Endothelial cell of umbilical vein (primary cell): ENCODE measurements at regions of chr12 and their contacts with region 1.

Region 1: DNA sequence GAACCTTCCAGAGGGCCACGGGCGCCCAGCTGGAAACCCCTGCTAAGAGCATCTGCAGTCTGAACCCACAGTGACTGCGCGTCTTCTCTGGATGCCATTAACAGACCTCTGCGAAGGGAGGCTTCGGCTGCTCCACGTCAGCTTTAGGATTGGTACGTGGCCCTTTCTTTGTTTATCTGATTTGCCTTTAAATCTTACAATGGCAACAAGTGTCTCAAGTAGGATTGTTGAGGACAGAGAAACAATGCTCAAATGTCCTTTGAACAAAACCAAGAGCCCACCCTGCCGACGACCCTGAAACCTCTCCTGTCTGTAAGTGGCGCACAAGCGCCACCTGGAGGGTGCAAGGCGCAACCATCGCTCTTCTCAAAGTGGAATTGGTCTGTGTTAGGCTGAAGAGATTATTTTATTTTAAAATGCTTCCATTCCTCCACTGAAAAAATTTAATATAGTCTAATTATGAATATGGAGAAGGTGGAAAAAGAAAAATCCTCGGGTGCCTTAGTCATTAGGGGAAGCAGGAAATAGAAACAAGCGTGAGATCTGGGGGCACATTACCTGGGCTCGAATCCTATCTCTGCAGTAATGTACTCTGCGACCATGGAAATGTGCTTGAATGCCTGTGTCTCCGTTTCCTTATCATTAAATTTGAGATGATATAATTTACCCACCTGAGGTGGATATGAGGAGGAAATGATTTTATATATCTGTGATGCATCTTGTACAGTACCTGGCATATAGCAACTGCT is 82.6 kb upstream of the PTPRB start:
- DNase-seq: peak; percentile 83
- H3K4me3 ChIP-seq: peak overlapping the region in 2 of 3 experiments; percentile 22 to 48
- H3K27ac ChIP-seq: peak overlapping the region; percentile 34
- H3K4me1 ChIP-seq: peaks cover 30% of the 10 kb centered on the region
- H3K27me3 ChIP-seq: no peaks in the 10 kb centered on the region
- CTCF ChIP-seq: peak; percentile 86 to 96
- POLR2A ChIP-seq: no peak

Region 2: GRCh38 chr12:69879041-69879960 is 840.5 kb before region 1 on chr12:
- CTCF ChIA-PET with region 1: interaction called, 17 read pairs
- POLR2A ChIA-PET with region 1: no interaction called
- dilution Hi-C with region 1: no loop called
- intact Hi-C with region 1: no loop called
- DNase-seq: peak; percentile 76
- H3K4me3 ChIP-seq: no peak overlapping the region
- H3K27ac ChIP-seq: no peak overlapping the region
- H3K4me1 ChIP-seq: no peaks in the 10 kb centered on the region
- H3K27me3 ChIP-seq: no peaks in the 10 kb centered on the region
- CTCF ChIP-seq: peak; percentile 87
- POLR2A ChIP-seq: no peak

Region 3: GRCh38 chr12:70543444-70543843 is 176.4 kb before region 1 on chr12:
- CTCF ChIA-PET with region 1: interaction called, 5 read pairs
- POLR2A ChIA-PET with region 1: no interaction called
- dilution Hi-C with region 1: no loop called
- intact Hi-C with region 1: loop called (anchors 1 kb)
- DNase-seq: peak; percentile 92
- H3K4me3 ChIP-seq: no peak overlapping the region
- H3K27ac ChIP-seq: peak overlapping the region; percentile 82
- H3K4me1 ChIP-seq: peaks cover 26% of the 10 kb centered on the region
- H3K27me3 ChIP-seq: no peaks in the 10 kb centered on the region
- CTCF ChIP-seq: no peak
- POLR2A ChIP-seq: peak; percentile 17

Region 4: DNA sequence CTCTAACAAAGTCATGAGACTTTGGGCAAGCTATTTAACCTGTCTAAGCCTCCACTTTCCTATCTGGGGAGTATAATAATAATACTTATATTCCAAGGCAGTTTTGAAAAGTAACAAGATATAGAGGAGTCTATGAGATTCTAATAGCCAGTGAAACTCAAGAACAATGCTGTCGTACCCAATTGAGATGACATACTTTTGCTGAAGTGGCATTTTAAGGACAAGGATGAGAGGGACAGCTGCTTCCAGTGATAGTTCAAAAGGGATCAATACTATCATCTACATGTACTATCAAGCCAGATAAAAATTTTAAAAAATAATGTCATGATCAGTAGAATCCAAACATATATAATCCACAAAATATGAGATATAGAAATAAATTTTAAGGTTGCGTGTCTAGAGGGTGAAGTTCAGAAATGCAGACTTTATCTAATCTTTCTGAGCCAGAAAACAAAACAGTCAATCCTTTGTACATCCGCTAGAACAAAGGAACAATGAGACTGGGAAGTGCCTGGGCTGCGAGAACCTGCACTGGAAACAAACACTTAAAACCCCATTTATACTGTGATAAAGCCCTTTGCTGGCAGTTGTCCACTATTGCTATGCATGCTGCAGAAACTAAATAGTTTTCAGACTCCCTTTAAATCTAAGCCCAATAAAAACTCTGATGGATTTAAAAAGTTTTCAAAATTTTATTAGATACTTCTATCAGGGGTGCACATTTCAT is 121.2 kb before region 1 on chr12:
- CTCF ChIA-PET with region 1: interaction called, 119 read pairs
- POLR2A ChIA-PET with region 1: no interaction called
- dilution Hi-C with region 1: loop called (anchors 25 kb)
- intact Hi-C with region 1: no loop called
- DNase-seq: peak; percentile 96
- H3K4me3 ChIP-seq: peak overlapping the region in 1 of 3 experiments; percentile 40
- H3K27ac ChIP-seq: peak overlapping the region; percentile 92
- H3K4me1 ChIP-seq: peaks cover 48% of the 10 kb centered on the region
- H3K27me3 ChIP-seq: no peaks in the 10 kb centered on the region
- CTCF ChIP-seq: no peak
- POLR2A ChIP-seq: peak; percentile 32

Region 5: DNA sequence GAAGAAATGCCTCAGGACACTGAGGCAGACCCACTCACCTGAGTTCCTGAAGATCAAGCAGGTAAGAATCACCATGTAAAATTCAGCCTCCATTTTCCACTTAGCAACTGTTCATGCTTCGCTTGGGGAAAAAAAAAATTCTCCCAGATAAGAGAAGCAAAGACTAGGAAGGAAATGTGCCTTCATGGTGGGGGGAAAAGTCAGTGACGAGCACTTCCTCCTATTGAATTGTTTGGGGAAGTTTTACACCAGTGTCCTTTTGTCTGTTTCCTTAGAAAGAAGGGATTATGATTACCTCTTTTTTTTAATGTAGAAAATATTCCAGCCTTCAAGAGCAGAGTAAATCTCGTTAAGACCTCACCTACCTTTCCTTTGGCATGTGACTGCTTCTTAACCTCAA is 82.5 kb before region 1 on chr12 and contains the start of gene PTPRB:
- CTCF ChIA-PET with region 1: interaction called, 23 read pairs
- POLR2A ChIA-PET with region 1: interaction called, 4 read pairs
- dilution Hi-C with region 1: no loop called
- intact Hi-C with region 1: loop called (anchors 1 kb)
- DNase-seq: peak; percentile 85
- H3K4me3 ChIP-seq: peak within 1 kb of the TSS; percentile 63 to 100 (median 99)
- H3K27ac ChIP-seq: peak within 1 kb of the TSS; percentile 100
- H3K4me1 ChIP-seq: peaks cover 52% of the 10 kb centered on the region
- H3K27me3 ChIP-seq: no peaks in the 10 kb centered on the region
- CTCF ChIP-seq: no peak
- POLR2A ChIP-seq: peak; percentile 45
- total RNA-seq, gene PTPRB: 150 and 151 TPM in 2 replicates

Region 6: GRCh38 chr12:70692681-70693288 is 27.1 kb before region 1 on chr12:
- CTCF ChIA-PET with region 1: interaction called, 8 read pairs
- POLR2A ChIA-PET with region 1: interaction called, 3 read pairs
- dilution Hi-C with region 1: no loop called
- intact Hi-C with region 1: loop called (anchors 1 kb)
- DNase-seq: peak; percentile 73
- H3K4me3 ChIP-seq: no peak overlapping the region
- H3K27ac ChIP-seq: no peak overlapping the region
- H3K4me1 ChIP-seq: peaks cover 16% of the 10 kb centered on the region
- H3K27me3 ChIP-seq: no peaks in the 10 kb centered on the region
- CTCF ChIP-seq: peak; percentile 53 to 55
- POLR2A ChIP-seq: no peak